Posterior cingulate gyrus (tissue), 11 donors: ENCODE measurements at regions of chr3 and their contacts with region 1.

Region 1: GRCh38 chr3:44477312-44478030 is at the start of gene ZNF445:
- DNase-seq: peak; percentile 71 to 98 (median 82)

Region 2: GRCh38 chr3:44323341-44323955 is 154.0 kb before region 1 on chr3:
- intact Hi-C with region 1: loop called (anchors 10 kb)
- DNase-seq: peak in 6 of 10 donors; percentile 53 to 88 (median 66)

Region 3: GRCh38 chr3:44510000-44510368 is 32.5 kb after region 1 on chr3:
- intact Hi-C with region 1: loop called (anchors 2 kb)
- DNase-seq: no peak